CD4-positive, alpha-beta T cell (primary cell): ENCODE measurements at regions of chr19 and their contacts with region 1.

Region 1: GRCh38 chr19:29873024-29873800 is 61.4 kb downstream of the CCNE1 start:
- DNase-seq: peak; percentile 41 to 84 (median 62)
- ATAC-seq: peak; percentile 83
- H3K4me3 ChIP-seq: peak overlapping the region; percentile 12
- H3K4me3 Mint-ChIP-seq: peak overlapping the region; percentile 70
- H3K27ac ChIP-seq: no peak overlapping the region
- H3K27ac Mint-ChIP-seq: no peak overlapping the region
- H3K4me1 ChIP-seq: peaks cover 17% of the 10 kb centered on the region
- H3K4me1 Mint-ChIP-seq: no peaks in the 10 kb centered on the region
- H3K27me3 ChIP-seq: peaks cover 12 to 13% of the 10 kb centered on the region in 2 experiments
- H3K27me3 Mint-ChIP-seq: peaks cover 38% of the 10 kb centered on the region
- CTCF ChIP-seq: peak; percentile 87

Region 2: DNA sequence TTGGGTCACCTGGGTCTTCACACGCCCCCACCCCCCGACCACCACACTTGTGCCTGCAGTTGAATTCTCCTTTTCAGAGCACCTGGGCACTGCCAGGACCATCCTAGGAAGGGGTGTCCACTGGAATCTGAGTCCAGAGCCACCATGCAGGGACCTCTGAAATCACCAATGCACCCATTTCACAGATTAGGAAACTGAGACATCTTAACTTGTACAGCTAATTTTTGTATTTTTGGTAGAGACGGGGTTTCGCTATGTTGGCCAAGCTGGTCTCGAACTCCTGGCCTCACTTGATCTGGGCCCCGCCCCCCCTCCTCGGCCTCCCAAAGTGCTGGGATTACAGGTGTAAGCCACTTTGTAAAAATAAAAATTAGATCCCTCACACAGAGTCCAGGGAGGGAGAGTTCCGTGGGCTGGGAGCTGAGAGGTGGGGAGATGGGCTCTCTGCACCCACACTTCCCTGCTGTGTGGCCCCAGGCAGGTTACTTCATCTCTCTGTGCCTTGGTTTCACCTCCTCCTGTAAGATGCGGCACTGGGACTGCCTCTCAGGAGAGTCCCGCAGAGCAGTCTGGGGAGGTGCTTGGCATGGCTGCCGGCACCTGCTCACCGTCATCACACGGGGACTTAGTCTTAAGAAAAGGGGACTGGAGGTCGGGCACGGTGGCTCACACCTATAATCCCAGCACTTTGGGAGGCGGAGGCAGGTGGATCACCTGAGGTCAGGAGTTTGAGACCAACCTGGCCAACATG is 112.3 kb before region 1 on chr19:
- CTCF ChIA-PET with region 1: interaction called, 25 read pairs
- POLR2A ChIA-PET with region 1: interaction called, 3 read pairs
- intact Hi-C with region 1: loop called (anchors 1 kb)
- DNase-seq: no peak
- ATAC-seq: no peak
- H3K4me3 ChIP-seq: no peak overlapping the region
- H3K4me3 Mint-ChIP-seq: no peak overlapping the region
- H3K27ac ChIP-seq: no peak overlapping the region
- H3K27ac Mint-ChIP-seq: no peak overlapping the region
- H3K4me1 ChIP-seq: peaks cover 9% of the 10 kb centered on the region
- H3K4me1 Mint-ChIP-seq: no peaks in the 10 kb centered on the region
- H3K27me3 ChIP-seq: peaks cover 0 to 3% of the 10 kb centered on the region in 2 experiments
- H3K27me3 Mint-ChIP-seq: no peaks in the 10 kb centered on the region
- CTCF ChIP-seq: no peak

Region 3: DNA sequence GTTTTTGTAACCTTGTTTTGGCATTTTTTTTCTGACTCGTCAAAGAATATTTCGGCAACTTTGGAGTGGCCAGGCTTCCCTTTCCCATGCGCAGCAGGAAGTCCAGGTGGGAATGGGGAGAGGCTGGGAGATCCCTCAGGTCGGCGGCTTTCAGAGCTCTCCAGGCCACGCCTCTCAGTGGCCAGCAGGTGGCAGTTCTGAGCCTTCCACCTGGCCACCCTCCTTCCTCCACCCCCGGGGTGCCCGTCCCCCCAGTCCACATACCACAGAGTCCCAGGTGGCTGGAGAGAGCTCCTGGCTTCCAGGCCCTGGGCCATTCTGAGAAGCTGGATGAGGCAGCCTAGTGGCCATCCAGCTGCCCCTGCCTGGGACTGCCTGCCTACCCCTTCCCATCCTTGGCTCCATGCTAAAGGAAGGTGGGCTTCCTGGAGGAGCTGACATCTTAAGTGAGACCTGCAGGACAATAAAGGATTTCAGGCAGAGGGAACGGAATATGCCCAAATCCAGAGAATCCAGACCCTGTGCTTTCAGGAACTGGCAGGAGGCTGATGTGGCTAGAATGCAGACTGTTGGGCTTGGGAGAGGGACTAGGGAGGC is 15.1 kb before region 1 on chr19:
- CTCF ChIA-PET with region 1: interaction called, 10 read pairs
- POLR2A ChIA-PET with region 1: interaction called, 3 read pairs
- intact Hi-C with region 1: no loop called
- DNase-seq: peak in 10 of 14 experiments; percentile 10 to 68 (median 35)
- ATAC-seq: peak; percentile 73
- H3K4me3 ChIP-seq: no peak overlapping the region
- H3K4me3 Mint-ChIP-seq: no peak overlapping the region
- H3K27ac ChIP-seq: no peak overlapping the region
- H3K27ac Mint-ChIP-seq: no peak overlapping the region
- H3K4me1 ChIP-seq: peaks cover 4% of the 10 kb centered on the region
- H3K4me1 Mint-ChIP-seq: peaks cover 4% of the 10 kb centered on the region
- H3K27me3 ChIP-seq: peaks cover 3 to 10% of the 10 kb centered on the region in 2 experiments
- H3K27me3 Mint-ChIP-seq: peaks cover 20% of the 10 kb centered on the region
- CTCF ChIP-seq: peak; percentile 66